ENCODE measurements at regions of chr4 and their contacts with region 1.

Region 1: GRCh38 chr4:1249148-1249730 is 309 bp upstream of the CTBP1 start:
- DNase-seq: peak; percentile 82 to 93 (median 86)
- ATAC-seq: peak; percentile 45 to 65 (median 54)
- H3K4me3 ChIP-seq: peak overlapping the region; percentile 65 to 95 (median 70)
- H3K27ac ChIP-seq: peak overlapping the region; percentile 83 to 95 (median 91)
- H3K4me1 ChIP-seq: peaks cover 19 to 34% (median 29%) of the 10 kb centered on the region in 3 donors
- H3K27me3 ChIP-seq: no peaks in the 10 kb centered on the region
- CTCF ChIP-seq: no peak

Region 2: GRCh38 chr4:721261-722168 is 527.7 kb before region 1 on chr4:
- intact Hi-C with region 1: no loop called
- DNase-seq: peak in 2 of 6 donors; percentile 30 to 62
- ATAC-seq: peak in 2 of 4 donors; percentile 13 to 34
- H3K4me3 ChIP-seq: no peak overlapping the region
- H3K27ac ChIP-seq: no peak overlapping the region
- H3K4me1 ChIP-seq: no peaks in the 10 kb centered on the region
- H3K27me3 ChIP-seq: no peaks in the 10 kb centered on the region
- CTCF ChIP-seq: no peak

Region 3: DNA sequence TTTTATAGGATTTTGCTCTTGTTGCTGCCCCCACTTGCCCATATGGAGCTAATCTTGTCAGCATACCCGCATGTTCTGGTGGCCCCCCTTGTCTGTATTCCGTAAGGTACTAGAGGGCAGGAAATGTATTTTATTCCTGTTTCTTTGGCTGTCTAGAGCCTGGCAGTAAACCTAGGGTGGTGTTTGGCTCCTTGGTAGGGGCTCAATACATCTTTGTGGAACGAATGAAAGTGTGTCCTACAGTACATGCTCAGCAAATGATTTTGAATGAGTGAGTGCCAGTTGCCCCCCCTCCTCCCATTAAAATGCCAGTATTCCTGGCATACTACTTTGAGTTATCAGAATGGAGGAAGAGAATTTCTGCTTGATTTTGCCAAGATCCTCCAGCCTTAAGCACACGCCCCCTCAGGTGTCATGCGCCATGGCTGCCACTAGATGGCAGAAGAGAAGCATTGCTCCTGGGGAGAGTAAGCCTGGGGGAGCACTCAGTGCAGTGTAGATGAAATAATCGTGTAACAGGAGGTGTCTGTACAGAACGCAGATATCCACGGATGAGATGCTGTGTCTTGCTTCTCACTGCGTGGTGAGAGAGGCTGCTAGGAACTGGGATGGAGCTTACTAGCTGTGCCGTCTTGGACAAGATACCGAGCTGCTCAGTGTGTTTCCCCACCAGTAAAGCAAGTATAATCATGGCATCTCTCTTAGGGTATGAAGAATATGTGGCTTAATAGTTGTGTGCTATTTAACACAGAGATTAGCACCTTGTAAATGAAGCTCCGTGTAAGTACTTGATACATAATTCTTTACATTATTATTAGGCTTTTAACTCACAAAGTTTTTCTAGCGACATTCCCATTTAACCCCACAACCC is 118.7 kb before region 1 on chr4:
- intact Hi-C with region 1: loop called in 1 of 3 experiments (anchors 10 kb)
- DNase-seq: peak; percentile 67 to 87 (median 80)
- ATAC-seq: peak; percentile 78 to 95 (median 86)
- H3K4me3 ChIP-seq: no peak overlapping the region
- H3K27ac ChIP-seq: no peak overlapping the region
- H3K4me1 ChIP-seq: peaks cover 0 to 13% (median 9%) of the 10 kb centered on the region in 3 donors
- H3K27me3 ChIP-seq: no peaks in the 10 kb centered on the region
- CTCF ChIP-seq: peak; percentile 96 to 99 (median 98)

Region 4: GRCh38 chr4:1337376-1337860 is 88.2 kb after region 1 on chr4:
- intact Hi-C with region 1: loop called in 2 of 3 experiments (anchors 5 to 10 kb)
- DNase-seq: peak in 1 of 6 donors; percentile 53
- ATAC-seq: peak in 2 of 4 donors; percentile 40 to 43
- H3K4me3 ChIP-seq: no peak overlapping the region
- H3K27ac ChIP-seq: no peak overlapping the region
- H3K4me1 ChIP-seq: no peaks in the 10 kb centered on the region
- H3K27me3 ChIP-seq: no peaks in the 10 kb centered on the region
- CTCF ChIP-seq: no peak

Region 5: DNA sequence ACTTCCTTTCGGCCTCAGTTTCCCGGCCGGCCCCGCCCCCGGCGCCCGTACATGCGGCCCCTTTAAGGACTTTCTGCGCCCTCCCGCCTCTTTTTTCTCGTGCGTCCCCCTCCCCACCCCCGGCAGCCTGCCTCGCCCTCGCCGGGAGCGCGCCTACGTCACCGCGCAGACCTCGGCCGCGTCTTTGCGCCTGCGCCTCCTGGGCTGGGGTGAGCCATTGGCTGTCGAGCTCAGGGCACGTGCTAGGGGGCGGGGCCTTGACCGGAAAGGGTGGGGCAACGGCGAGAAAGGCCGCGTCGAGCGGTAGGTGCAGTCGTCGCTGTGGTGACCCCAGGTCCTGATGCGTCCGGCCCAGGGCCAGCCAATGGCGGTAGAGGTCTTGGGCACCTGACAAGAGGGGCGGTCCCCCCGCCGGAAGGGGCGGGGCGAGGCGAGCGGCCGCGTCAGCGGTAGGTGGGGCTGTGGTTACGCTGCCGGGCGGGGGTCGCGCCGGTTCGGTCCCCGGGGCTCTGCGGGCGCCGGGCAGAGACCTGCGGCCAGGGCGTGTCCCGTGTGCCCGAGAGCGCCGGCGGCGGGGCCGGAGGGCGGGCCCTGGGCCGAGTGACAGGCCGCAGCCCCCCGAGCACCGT is 97.7 kb after region 1 on chr4 and contains the start of gene UVSSA:
- intact Hi-C with region 1: loop called in 1 of 3 experiments (anchors 5 kb)
- DNase-seq: peak; percentile 99 to 100 (median 100)
- ATAC-seq: peak; percentile 87 to 96 (median 90)
- H3K4me3 ChIP-seq: peak within 1 kb of the TSS; percentile 82 to 97 (median 84)
- H3K27ac ChIP-seq: peak within 1 kb of the TSS; percentile 95 to 98 (median 96)
- H3K4me1 ChIP-seq: peaks cover 7 to 13% (median 8%) of the 10 kb centered on the region in 3 donors
- H3K27me3 ChIP-seq: no peaks in the 10 kb centered on the region
- CTCF ChIP-seq: no peak
- total RNA-seq, gene UVSSA: 9.2 to 24.7 (median 12.4) TPM

Measured in pancreas (tissue), 10 donors.